OCI-LY7 (cell line): ENCODE measurements at regions of chr1 and their contacts with region 1.

Region 1: DNA sequence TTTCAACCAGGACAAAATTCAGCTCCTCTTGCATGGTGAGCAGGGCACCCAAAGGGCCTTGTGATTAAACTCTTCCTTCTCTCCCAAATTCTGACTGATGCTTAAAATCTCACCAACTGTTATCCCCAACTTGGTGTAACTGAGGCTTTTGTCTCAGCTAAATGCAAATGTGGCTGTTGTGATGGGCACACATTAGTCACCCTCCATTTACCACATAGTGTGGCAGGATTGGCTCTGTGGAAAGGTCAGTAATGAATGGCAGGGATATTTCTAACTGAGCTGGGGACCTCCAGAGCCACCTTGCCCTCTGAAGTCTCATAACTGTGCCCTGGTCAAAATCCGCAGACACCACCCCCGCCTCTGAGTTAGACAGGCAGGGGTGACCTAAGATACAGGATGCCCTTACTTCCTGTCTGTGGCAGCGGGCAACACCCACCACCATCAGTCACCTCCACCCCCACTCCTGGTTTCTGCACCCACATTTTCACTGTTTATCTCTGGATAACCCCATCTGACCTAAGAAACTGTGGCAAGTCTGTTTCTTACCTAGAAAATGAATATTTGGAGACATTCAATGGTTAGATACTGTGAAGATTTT is 25.4 kb upstream of the RGS16 start:
- DNase-seq: peak; percentile 59
- H3K4me3 ChIP-seq: peak overlapping the region; percentile 37
- H3K27ac ChIP-seq: peak overlapping the region; percentile 52
- H3K4me1 ChIP-seq: peaks cover 99% of the 10 kb centered on the region
- CTCF ChIP-seq: no peak

Region 2: DNA sequence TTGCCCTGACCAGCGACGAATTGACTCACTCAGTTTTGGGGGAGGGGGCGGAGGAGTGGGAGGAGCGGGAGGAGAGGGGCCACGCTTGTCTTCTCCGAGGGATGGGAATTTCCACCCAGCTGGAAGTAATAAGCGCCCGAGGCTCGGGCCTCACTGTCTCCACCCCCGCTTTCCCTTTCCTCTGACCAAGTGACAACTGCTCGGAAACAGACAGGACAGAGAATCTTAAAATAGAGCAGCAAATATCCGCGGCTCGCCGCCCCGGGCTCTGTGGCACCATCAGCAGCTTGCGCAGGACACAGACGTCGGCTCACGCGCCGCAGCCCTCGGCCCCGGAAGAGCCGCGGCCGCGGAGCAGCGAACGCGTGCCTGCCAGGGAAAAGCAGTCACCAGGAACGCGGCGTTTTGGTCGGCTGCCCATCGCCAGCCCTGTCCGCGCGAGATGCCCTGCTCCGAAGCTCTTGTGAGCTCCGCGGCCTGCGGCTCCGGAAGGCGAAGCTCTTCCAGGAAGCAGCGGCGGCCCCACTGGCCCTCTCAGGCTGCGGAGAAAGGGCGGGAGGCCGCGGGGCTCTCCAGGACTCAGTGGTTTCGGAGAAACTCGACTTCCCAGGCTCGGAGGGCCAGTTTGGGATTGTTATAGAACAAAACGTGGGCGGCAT is 14.7 kb before region 1 on chr1:
- CTCF ChIA-PET with region 1: interaction called, 4 read pairs
- POLR2A ChIA-PET with region 1: interaction called, 113 read pairs
- intact Hi-C with region 1: no loop called
- DNase-seq: peak; percentile 43
- H3K4me3 ChIP-seq: peak overlapping the region; percentile 61
- H3K27ac ChIP-seq: peak overlapping the region; percentile 71
- H3K4me1 ChIP-seq: peaks cover 94% of the 10 kb centered on the region
- CTCF ChIP-seq: no peak